HCT116 (cell line): ENCODE measurements at regions of chr5 and their contacts with region 1.

Region 1: GRCh38 chr5:149551200-149552037 is at the start of gene CSNK1A1:
- DNase-seq: peak; percentile 96
- ATAC-seq: peak; percentile 93
- H3K4me3 ChIP-seq: peak within 1 kb of the TSS; percentile 85 to 99
- H3K27ac ChIP-seq: peak within 1 kb of the TSS; percentile 93
- H3K4me1 ChIP-seq: peaks cover 11 to 64% of the 10 kb centered on the region in 2 experiments; a peak in 3 of 4 replicates
- H3K27me3 ChIP-seq: no peaks in the 10 kb centered on the region
- CTCF ChIP-seq: peak in 2 of 3 experiments; percentile 76 to 84; a peak in 4 of 6 replicates
- POLR2A ChIP-seq: peak; percentile 84
- RAD21 ChIP-seq: no peak
- total RNA-seq, gene CSNK1A1: 263 TPM

Region 2: GRCh38 chr5:149422366-149423048 is 128.9 kb before region 1 on chr5:
- CTCF ChIA-PET with region 1: no interaction called
- POLR2A ChIA-PET with region 1: no interaction called
- RAD21 ChIA-PET with region 1: no interaction called
- intact Hi-C with region 1: no loop called
- DNase-seq: no peak
- ATAC-seq: no peak
- H3K4me3 ChIP-seq: no peak overlapping the region
- H3K27ac ChIP-seq: no peak overlapping the region
- H3K4me1 ChIP-seq: peaks cover 7 to 25% of the 10 kb centered on the region in 2 experiments; a peak in 3 of 4 replicates
- H3K27me3 ChIP-seq: no peaks in the 10 kb centered on the region
- CTCF ChIP-seq: no peak
- POLR2A ChIP-seq: no peak
- RAD21 ChIP-seq: no peak

Region 3: DNA sequence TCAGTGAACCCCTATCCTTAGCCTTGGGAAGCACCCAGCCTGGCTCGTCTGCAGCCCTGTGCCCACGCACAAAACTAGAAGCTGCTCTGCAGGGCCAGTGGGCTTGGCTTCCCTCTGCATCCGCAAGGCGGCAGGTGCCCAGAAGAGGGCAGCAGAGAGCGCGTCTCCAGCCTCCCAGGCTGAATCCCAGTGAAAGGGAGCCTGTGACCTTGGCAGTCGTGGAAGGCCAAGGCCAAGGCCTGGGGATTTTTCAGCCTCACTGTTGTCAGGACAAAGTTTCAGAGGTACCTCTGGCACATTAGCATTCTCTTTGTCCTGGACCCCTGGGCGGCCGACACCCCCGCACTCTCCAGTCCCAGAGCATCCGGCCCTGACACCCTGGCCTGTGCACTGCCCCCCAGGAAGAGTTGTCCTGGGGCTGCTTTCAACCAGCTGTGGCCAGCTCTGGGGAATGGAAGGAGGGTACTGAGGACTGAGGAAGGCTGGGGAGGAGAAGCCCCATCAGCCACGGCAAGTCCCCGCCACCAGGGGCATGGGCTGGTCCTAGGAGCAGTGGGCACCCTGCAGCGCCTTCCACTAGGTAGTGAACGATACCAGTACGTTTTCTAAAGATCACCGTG is 108.7 kb before region 1 on chr5:
- CTCF ChIA-PET with region 1: interaction called, 12 read pairs
- POLR2A ChIA-PET with region 1: interaction called, 7 read pairs
- RAD21 ChIA-PET with region 1: interaction called, 3 to 6 read pairs
- intact Hi-C with region 1: loop called (anchors 1 kb)
- DNase-seq: no peak
- ATAC-seq: peak; percentile 71
- H3K4me3 ChIP-seq: no peak overlapping the region
- H3K27ac ChIP-seq: no peak overlapping the region; the same call in 1 of the 2 replicates
- H3K4me1 ChIP-seq: peaks cover 41 to 77% of the 10 kb centered on the region in 2 experiments
- H3K27me3 ChIP-seq: no peaks in the 10 kb centered on the region
- CTCF ChIP-seq: peak in 2 of 3 experiments; percentile 90 to 91; a peak in 4 of 6 replicates
- POLR2A ChIP-seq: no peak
- RAD21 ChIP-seq: no peak

Region 4: GRCh38 chr5:149913436-149914419 is 362.3 kb after region 1 on chr5:
- CTCF ChIA-PET with region 1: no interaction called
- POLR2A ChIA-PET with region 1: no interaction called
- RAD21 ChIA-PET with region 1: no interaction called
- intact Hi-C with region 1: no loop called
- DNase-seq: no peak
- ATAC-seq: no peak
- H3K4me3 ChIP-seq: no peak overlapping the region
- H3K27ac ChIP-seq: no peak overlapping the region
- H3K4me1 ChIP-seq: no peaks in the 10 kb centered on the region
- H3K27me3 ChIP-seq: peaks cover 4% of the 10 kb centered on the region; the same call in 1 of the 2 replicates
- CTCF ChIP-seq: no peak
- POLR2A ChIP-seq: no peak
- RAD21 ChIP-seq: no peak